ENCODE measurements at regions of chr12 and their contacts with region 1.

Region 1: DNA sequence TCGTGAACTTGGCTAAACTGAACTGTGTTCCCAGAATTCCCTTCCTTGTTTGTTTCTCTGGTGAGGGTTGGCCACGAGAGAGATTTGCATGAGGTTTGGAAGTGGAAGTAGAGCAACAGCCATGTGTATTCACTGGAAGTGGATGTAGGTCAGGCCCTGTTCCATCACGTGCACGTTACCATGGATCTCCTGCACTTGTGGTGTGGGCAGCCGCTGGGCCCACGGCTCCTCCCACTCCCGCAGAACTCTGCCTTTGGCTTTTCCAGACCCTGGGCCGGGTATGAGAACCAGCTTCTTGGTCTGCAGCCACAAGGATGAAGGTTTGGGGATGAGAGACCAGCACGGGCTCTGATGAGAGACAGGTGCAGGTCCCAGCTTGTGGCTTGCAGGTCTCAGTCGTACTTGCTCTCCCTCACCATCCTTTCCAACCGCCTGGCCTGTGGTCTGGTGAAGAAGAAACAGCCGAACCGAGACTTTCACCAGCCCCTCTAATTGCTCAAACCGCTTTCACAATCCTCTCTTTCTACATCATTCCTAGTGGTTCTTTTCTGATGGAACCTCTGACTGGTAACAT is 94.9 kb downstream of the DUSP16 start:
- DNase-seq: peak; percentile 80
- H3K4me3 Mint-ChIP-seq: peak overlapping the region; percentile 49
- H3K27ac Mint-ChIP-seq: peak overlapping the region; percentile 97
- H3K4me1 Mint-ChIP-seq: peaks cover 84% of the 10 kb centered on the region
- H3K27me3 Mint-ChIP-seq: no peaks in the 10 kb centered on the region

Region 2: GRCh38 chr12:12486661-12487240 is 19.0 kb after region 1 on chr12:
- CTCF ChIA-PET with region 1: no interaction called
- POLR2A ChIA-PET with region 1: interaction called, 71 read pairs
- intact Hi-C with region 1: no loop called
- DNase-seq: peak; percentile 59
- H3K4me3 Mint-ChIP-seq: peak overlapping the region; percentile 6
- H3K27ac Mint-ChIP-seq: peak overlapping the region; percentile 99
- H3K4me1 Mint-ChIP-seq: peaks cover 56% of the 10 kb centered on the region
- H3K27me3 Mint-ChIP-seq: no peaks in the 10 kb centered on the region

Region 3: DNA sequence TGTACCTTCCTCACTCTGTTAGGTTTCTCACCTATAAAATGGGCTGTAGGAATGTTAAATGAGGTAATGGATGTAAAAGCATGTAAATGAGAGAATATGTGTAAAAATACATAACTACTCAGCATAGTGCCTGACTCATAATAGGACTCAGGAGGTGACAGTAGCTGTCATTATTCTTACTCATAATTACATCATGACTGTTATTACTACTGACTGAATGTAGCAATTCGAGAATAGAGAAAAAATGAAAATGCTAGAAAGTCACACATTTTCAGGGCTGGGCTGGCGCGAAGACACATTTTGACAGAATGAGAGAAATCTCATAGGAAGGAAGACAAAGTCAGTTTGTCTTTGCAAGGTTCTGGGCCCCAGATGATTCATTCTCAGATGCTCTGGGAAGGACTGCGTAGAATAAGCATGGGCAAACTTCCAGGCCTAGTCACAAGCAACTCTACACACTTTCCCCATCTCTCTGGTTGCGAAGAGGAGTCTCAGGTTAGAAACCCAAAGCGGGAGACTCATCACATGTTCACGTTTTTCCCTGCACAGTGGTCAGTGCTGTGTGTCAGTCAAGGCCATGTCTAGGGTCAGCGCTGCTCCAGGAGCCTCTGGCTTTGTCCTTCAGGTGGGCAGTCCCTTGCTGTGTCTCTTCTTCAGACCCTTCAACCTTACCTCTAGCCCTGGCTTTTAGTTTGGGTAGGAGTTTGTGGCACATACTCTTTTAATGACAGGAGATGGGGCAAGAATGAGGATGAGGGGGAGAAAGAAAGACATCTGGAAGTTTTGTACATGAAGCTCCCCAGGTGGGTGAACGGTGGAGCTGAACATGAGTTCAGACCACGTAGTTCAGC is 432.0 kb after region 1 on chr12:
- CTCF ChIA-PET with region 1: no interaction called
- POLR2A ChIA-PET with region 1: no interaction called
- intact Hi-C with region 1: no loop called
- DNase-seq: peak; percentile 86
- H3K4me3 Mint-ChIP-seq: no peak overlapping the region
- H3K27ac Mint-ChIP-seq: peak overlapping the region; percentile 77
- H3K4me1 Mint-ChIP-seq: peaks cover 19% of the 10 kb centered on the region
- H3K27me3 Mint-ChIP-seq: peaks cover 16% of the 10 kb centered on the region

Measured in activated CD4-positive, alpha-beta memory T cell treated with anti-CD3 and anti-CD28 coated beads for 36 hours (primary cell).